HCT116 (cell line): ENCODE measurements at regions of chr11 and their contacts with region 1.

Region 1: GRCh38 chr11:75388386-75389275 is 10.7 kb upstream of the RPS3 start:
- DNase-seq: peak; percentile 81
- ATAC-seq: peak; percentile 78
- H3K4me3 ChIP-seq: no peak overlapping the region
- H3K27ac ChIP-seq: peak overlapping the region; percentile 8; the same call in 1 of the 2 replicates
- H3K4me1 ChIP-seq: peaks cover 23 to 48% of the 10 kb centered on the region in 2 experiments
- H3K27me3 ChIP-seq: no peaks in the 10 kb centered on the region
- CTCF ChIP-seq: peak; percentile 77 to 89 (median 88)
- POLR2A ChIP-seq: no peak
- RAD21 ChIP-seq: peak; percentile 93

Region 2: GRCh38 chr11:75233742-75234172 is 154.9 kb before region 1 on chr11:
- CTCF ChIA-PET with region 1: no interaction called
- POLR2A ChIA-PET with region 1: no interaction called
- RAD21 ChIA-PET with region 1: no interaction called
- intact Hi-C with region 1: no loop called
- DNase-seq: no peak
- ATAC-seq: no peak
- H3K4me3 ChIP-seq: no peak overlapping the region
- H3K27ac ChIP-seq: no peak overlapping the region
- H3K4me1 ChIP-seq: no peaks in the 10 kb centered on the region
- H3K27me3 ChIP-seq: peaks cover 7% of the 10 kb centered on the region; the same call in 1 of the 2 replicates
- CTCF ChIP-seq: no peak
- POLR2A ChIP-seq: no peak
- RAD21 ChIP-seq: no peak

Region 3: GRCh38 chr11:75328426-75329277 is 60.0 kb before region 1 on chr11:
- CTCF ChIA-PET with region 1: interaction called, 4 read pairs
- POLR2A ChIA-PET with region 1: interaction called, 3 read pairs
- RAD21 ChIA-PET with region 1: no interaction called
- intact Hi-C with region 1: loop called (anchors 1 kb)
- DNase-seq: peak; percentile 35
- ATAC-seq: peak; percentile 58
- H3K4me3 ChIP-seq: no peak overlapping the region
- H3K27ac ChIP-seq: no peak overlapping the region
- H3K4me1 ChIP-seq: peaks cover 42 to 57% of the 10 kb centered on the region in 2 experiments
- H3K27me3 ChIP-seq: no peaks in the 10 kb centered on the region
- CTCF ChIP-seq: peak; percentile 48 to 79 (median 62)
- POLR2A ChIP-seq: no peak
- RAD21 ChIP-seq: peak; percentile 88

Region 4: DNA sequence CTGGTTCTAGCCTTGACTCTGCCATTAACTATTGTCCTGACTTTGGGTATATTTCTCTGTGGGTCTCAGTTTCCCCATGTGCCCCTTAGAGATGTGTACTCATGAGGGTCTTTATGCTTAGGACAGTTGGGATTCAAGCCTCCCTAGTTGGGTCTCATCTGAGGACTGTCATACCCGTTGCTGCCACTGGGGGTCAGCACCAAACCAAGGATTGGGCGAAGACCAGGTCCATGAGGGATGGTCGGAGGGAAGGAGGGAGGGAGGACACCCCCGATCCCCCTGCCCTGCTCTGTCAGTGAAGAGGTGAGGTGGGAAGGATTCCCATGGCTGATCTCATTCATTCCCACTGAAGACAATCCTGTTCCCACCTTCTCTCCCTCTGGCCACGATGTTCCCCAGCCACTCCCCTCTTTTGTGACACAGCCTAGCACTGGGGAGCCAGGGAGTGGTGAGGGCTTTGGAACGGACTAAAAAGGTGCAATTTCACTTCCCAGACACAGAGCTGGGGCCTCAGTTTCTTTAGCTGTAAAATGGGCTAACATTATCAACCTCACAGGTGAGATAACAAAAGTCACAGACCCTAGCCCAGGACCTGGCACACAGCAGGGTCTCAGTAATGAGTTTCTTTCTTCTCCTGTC is 56.8 kb after region 1 on chr11:
- CTCF ChIA-PET with region 1: no interaction called
- POLR2A ChIA-PET with region 1: no interaction called
- RAD21 ChIA-PET with region 1: no interaction called
- intact Hi-C with region 1: loop called (anchors 5 kb)
- DNase-seq: peak; percentile 22
- ATAC-seq: peak; percentile 91
- H3K4me3 ChIP-seq: no peak overlapping the region
- H3K27ac ChIP-seq: no peak overlapping the region
- H3K4me1 ChIP-seq: no peaks in the 10 kb centered on the region
- H3K27me3 ChIP-seq: no peaks in the 10 kb centered on the region
- CTCF ChIP-seq: peak; percentile 91 to 98 (median 93)
- POLR2A ChIP-seq: no peak
- RAD21 ChIP-seq: peak; percentile 98

Region 5: GRCh38 chr11:75532200-75533048 is 143.8 kb after region 1 on chr11:
- CTCF ChIA-PET with region 1: interaction called, 36 read pairs
- POLR2A ChIA-PET with region 1: interaction called, 5 read pairs
- RAD21 ChIA-PET with region 1: no interaction called
- intact Hi-C with region 1: loop called (anchors 1 kb)
- DNase-seq: peak; percentile 56
- ATAC-seq: peak; percentile 45
- H3K4me3 ChIP-seq: peak overlapping the region in 1 of 2 experiments; percentile 35; a peak in 1 of 4 replicates
- H3K27ac ChIP-seq: no peak overlapping the region; the same call in 1 of the 2 replicates
- H3K4me1 ChIP-seq: peaks cover 33 to 51% of the 10 kb centered on the region in 2 experiments
- H3K27me3 ChIP-seq: no peaks in the 10 kb centered on the region
- CTCF ChIP-seq: peak; percentile 82 to 96 (median 82)
- POLR2A ChIP-seq: no peak
- RAD21 ChIP-seq: peak; percentile 99